Activated B cell treated with CpG ODN at 0.5 μM for 24 hours (primary cell): ENCODE measurements at regions of chr1 and their contacts with region 1.

Region 1: DNA sequence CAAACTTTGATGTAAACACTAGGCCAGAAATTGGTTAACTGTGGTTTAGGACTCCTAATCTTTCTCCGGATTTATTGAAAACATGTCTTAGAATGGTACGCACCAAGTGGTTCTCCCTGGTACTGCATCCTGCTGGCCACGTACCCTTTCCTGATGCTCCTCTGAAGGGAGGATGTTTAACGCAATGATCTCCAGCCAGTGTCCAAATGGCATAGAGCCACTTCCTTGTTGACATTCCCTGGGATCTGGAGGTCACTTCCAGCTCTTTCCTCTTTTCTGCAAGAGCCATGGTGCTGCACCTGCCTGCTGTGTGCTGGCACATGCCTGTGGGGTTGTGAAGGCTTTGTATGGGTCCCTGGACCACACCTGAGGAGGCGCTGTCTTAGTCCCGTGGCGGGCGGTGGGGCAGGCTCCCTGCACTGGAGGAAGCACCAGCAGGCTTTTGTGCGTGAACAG is 53.9 kb downstream of the GALNT2 start:
- DNase-seq: no peak
- ATAC-seq: no peak
- H3K4me3 Mint-ChIP-seq: peak overlapping the region; percentile 12
- H3K27ac Mint-ChIP-seq: peak overlapping the region; percentile 90
- H3K4me1 Mint-ChIP-seq: peaks cover 94% of the 10 kb centered on the region
- H3K27me3 Mint-ChIP-seq: no peaks in the 10 kb centered on the region
- CTCF ChIP-seq: no peak

Region 2: DNA sequence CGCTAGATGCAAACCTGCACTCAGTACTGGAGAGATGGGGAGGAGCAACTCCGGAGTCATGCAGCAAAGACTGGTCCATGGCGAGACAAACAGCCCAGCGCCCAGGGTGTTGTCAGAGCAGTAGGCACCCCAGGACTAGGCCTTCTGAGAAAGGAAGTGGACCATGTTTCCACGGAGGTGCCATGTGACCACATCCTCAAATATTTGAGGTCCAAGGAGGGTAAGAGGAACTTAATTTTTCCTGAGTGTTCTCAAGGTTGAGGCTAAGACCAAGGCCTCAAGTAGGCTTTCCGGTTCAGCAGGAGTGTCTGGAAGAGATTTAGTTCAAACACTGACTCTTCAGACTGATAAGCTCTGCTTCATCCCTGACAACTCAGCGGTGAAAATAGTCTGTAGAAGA is 1199.5 kb before region 1 on chr1:
- CTCF ChIA-PET with region 1: no interaction called
- POLR2A ChIA-PET with region 1: no interaction called
- intact Hi-C with region 1: no loop called
- DNase-seq: no peak
- ATAC-seq: no peak
- H3K4me3 Mint-ChIP-seq: no peak overlapping the region
- H3K27ac Mint-ChIP-seq: no peak overlapping the region
- H3K4me1 Mint-ChIP-seq: no peaks in the 10 kb centered on the region
- H3K27me3 Mint-ChIP-seq: peaks cover 8% of the 10 kb centered on the region
- CTCF ChIP-seq: no peak

Region 3: GRCh38 chr1:229661022-229661877 is 459.7 kb before region 1 on chr1:
- CTCF ChIA-PET with region 1: interaction called, 13 read pairs
- POLR2A ChIA-PET with region 1: interaction called, 11 read pairs
- intact Hi-C with region 1: loop called (anchors 5 kb)
- DNase-seq: peak; percentile 70
- ATAC-seq: peak; percentile 87
- H3K4me3 Mint-ChIP-seq: no peak overlapping the region
- H3K27ac Mint-ChIP-seq: peak overlapping the region; percentile 50
- H3K4me1 Mint-ChIP-seq: peaks cover 11% of the 10 kb centered on the region
- H3K27me3 Mint-ChIP-seq: no peaks in the 10 kb centered on the region
- CTCF ChIP-seq: peak; percentile 21

Region 4: DNA sequence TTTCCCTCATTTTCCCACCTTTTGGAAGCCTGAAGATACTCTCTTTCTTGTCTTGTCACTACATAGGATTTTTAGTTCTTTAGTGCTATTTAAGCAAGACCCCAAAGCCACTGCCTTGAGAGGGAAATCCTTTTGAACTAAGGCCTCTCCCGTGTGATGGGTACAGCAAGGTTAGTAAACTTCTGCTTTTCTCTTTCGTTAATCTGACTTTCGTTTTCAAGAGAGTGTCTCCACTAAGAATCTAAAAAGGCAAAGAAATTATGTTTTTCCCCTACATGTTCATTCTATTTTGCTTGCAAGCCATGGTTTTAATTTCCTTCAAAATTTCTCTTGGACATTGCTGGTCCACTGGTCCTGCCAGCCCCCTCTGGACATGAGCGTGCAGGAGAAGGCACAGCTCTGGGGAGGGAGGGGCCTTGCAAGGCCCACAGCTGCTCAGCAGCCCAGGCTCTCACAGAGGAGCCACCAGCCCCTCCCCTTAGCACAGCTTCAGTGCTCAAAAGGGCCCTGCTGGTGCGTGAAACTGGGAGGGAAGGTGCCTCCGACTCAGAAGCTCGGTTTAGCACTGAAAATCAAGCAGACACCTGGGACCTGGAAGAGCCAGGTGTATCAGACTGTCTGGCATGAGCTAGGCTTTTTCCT is 264.8 kb before region 1 on chr1:
- CTCF ChIA-PET with region 1: no interaction called
- POLR2A ChIA-PET with region 1: interaction called, 10 read pairs
- intact Hi-C with region 1: loop called (anchors 5 kb)
- DNase-seq: peak; percentile 55
- ATAC-seq: peak; percentile 99
- H3K4me3 Mint-ChIP-seq: peak overlapping the region; percentile 90
- H3K27ac Mint-ChIP-seq: peak overlapping the region; percentile 97
- H3K4me1 Mint-ChIP-seq: peaks cover 36% of the 10 kb centered on the region
- H3K27me3 Mint-ChIP-seq: no peaks in the 10 kb centered on the region
- CTCF ChIP-seq: no peak

Region 5: GRCh38 chr1:230109895-230110667 is 10.9 kb before region 1 on chr1:
- CTCF ChIA-PET with region 1: interaction called, 17 read pairs
- POLR2A ChIA-PET with region 1: interaction called, 222 read pairs
- intact Hi-C with region 1: loop called (anchors 1 kb)
- DNase-seq: peak; percentile 56
- ATAC-seq: peak; percentile 87
- H3K4me3 Mint-ChIP-seq: peak overlapping the region; percentile 68
- H3K27ac Mint-ChIP-seq: peak overlapping the region; percentile 88
- H3K4me1 Mint-ChIP-seq: peaks cover 93% of the 10 kb centered on the region
- H3K27me3 Mint-ChIP-seq: no peaks in the 10 kb centered on the region
- CTCF ChIP-seq: no peak

Region 6: GRCh38 chr1:230149751-230150584 is 29.0 kb after region 1 on chr1:
- CTCF ChIA-PET with region 1: interaction called, 4 read pairs
- POLR2A ChIA-PET with region 1: interaction called, 132 read pairs
- intact Hi-C with region 1: loop called (anchors 1 kb)
- DNase-seq: no peak
- ATAC-seq: peak; percentile 81
- H3K4me3 Mint-ChIP-seq: peak overlapping the region; percentile 80
- H3K27ac Mint-ChIP-seq: peak overlapping the region; percentile 94
- H3K4me1 Mint-ChIP-seq: peaks cover 71% of the 10 kb centered on the region
- H3K27me3 Mint-ChIP-seq: no peaks in the 10 kb centered on the region
- CTCF ChIP-seq: no peak

Region 7: DNA sequence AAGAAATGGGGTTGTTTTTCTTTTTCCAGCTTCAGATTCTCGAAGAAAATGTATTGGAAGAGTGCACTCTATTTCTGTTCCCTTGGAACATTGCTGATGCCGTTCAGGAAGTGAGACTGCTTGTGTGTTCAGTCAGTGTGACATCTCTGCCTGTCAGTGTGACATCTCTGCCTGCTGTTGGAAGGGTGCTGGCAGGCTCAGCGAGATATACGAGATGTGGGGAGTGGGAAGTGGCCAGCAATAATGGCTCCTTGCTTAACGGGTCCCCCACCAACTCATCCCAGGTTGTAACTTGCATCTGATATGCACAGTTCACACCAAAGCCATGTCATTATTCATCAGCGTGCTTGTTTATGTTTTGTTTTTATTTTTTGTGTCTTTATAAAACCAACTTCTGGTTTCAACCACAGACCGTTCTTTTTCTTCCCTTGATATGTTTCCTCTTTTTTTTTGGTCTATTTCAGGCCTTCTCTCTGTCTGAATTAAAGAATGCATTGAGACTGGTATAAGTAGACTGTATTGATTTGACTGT is 91.5 kb after region 1 on chr1:
- CTCF ChIA-PET with region 1: no interaction called
- POLR2A ChIA-PET with region 1: interaction called, 5 read pairs
- intact Hi-C with region 1: loop called (anchors 1 kb)
- DNase-seq: no peak
- ATAC-seq: peak; percentile 60
- H3K4me3 Mint-ChIP-seq: peak overlapping the region; percentile 65
- H3K27ac Mint-ChIP-seq: peak overlapping the region; percentile 84
- H3K4me1 Mint-ChIP-seq: peaks cover 97% of the 10 kb centered on the region
- H3K27me3 Mint-ChIP-seq: no peaks in the 10 kb centered on the region
- CTCF ChIP-seq: no peak